ENCODE measurements at regions of chr12 and their contacts with region 1.

Region 1: GRCh38 chr12:1583421-1584078 is 10.8 kb downstream of the FBXL14 start:
- DNase-seq: peak; percentile 60
- ATAC-seq: peak; percentile 83 to 88

Region 2: DNA sequence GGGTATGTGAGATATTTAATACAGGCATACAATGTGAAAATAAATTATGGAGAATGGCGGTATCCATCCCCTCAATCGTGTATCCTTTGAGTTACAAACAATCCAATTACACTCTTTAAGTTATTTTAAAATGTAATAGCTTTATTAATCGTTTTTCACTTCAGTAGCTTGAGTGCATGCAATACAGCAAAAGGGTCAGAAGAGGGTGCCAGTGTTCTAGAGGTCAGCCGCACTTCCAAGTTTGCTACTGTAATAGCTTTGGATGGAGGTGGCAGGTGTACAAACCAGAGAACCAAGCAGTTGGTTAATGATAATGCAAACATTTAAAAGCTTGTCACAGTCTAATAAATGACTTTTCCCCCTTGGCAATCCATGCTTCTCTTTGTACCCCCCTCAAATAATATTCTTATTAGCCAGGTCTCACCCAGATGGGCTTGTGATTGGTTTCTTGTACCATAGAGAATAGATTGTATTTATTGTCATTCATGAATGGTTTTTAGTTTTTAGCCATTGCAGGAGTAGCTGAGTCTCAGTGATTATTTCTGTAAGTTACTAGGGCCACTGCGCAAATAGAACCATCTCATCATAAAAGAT is 465.5 kb before region 1 on chr12:
- intact Hi-C with region 1: loop called in 1 of 2 experiments (anchors 2 kb)
- DNase-seq: peak; percentile 71
- ATAC-seq: peak; percentile 54 to 57

Region 3: DNA sequence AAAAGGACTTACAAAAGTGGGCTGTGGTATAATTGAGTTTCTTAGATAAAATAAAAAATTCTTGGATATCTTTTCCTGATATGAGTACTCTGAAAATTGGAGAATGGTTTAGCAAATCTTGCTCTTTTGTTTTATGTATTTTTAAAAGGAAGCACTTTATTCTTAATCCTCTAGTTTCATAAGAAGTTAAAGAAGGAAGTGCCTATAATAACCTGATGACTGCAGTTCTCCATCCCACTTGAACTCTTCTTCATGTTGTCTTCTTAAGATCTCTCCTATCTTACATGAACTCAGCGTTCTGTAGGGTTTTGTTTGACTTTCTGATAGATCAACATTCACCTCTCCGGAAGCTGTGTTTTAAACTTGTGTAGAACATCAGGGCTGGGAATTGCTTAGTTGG is 321.5 kb before region 1 on chr12:
- intact Hi-C with region 1: loop called in 1 of 2 experiments (anchors 10 kb)
- DNase-seq: no peak
- ATAC-seq: no peak

Region 4: GRCh38 chr12:1791104-1791841 is 207.7 kb after region 1 on chr12:
- intact Hi-C with region 1: no loop called
- DNase-seq: peak; percentile 67
- ATAC-seq: no peak

Measured in left cardiac atrium (tissue), 4 donors.